ENCODE measurements at regions of chr13 and their contacts with region 1.

Region 1: GRCh38 chr13:43905435-43906031 is 25.8 kb downstream of the LACC1 start:
- DNase-seq: peak; percentile 44
- H3K4me3 ChIP-seq: no peak overlapping the region
- H3K27ac ChIP-seq: no peak overlapping the region
- H3K4me1 ChIP-seq: no peaks in the 10 kb centered on the region
- H3K27me3 ChIP-seq: no peaks in the 10 kb centered on the region
- CTCF ChIP-seq: peak; percentile 63

Region 2: GRCh38 chr13:43786773-43787517 is 118.6 kb before region 1 on chr13 and contains the start of gene ENOX1:
- intact Hi-C with region 1: no loop called
- DNase-seq: peak; percentile 22
- H3K4me3 ChIP-seq: peak within 1 kb of the TSS; percentile 50
- H3K27ac ChIP-seq: peak within 1 kb of the TSS; percentile 66
- H3K4me1 ChIP-seq: peaks cover 3% of the 10 kb centered on the region
- H3K27me3 ChIP-seq: peaks cover 9% of the 10 kb centered on the region
- CTCF ChIP-seq: no peak
- total RNA-seq, gene ENOX1: 0.22 to 1.4 TPM

Region 3: DNA sequence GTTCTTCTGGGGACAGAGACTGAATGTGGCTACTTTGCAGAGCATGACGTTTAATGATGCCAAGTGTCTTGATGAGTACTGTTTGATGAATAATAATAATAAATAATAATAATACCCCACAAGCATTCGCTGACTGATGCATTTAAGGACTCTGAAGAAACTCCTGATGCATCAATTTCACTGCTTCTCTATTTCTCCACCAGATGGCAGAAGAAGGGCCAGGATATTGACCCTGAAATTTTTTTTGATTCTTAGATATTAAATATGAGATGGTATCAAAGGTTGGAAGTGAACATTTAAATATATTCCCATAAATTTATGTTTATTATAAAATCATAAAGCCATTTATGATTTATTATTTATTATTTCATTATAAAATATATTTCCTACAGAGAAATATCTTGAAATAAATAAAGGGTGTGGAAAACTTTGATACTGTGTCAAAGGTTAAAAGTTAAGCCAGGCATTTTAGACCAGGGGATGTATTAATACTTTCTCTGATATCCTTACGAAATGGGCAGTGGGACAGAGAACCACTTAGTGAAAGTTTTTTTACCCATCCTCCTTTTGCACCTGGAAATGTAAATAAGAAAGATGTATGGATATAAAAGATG is 145.0 kb after region 1 on chr13:
- intact Hi-C with region 1: loop called (anchors 2 kb)
- DNase-seq: no peak
- H3K4me3 ChIP-seq: no peak overlapping the region
- H3K27ac ChIP-seq: peak overlapping the region; percentile 42
- H3K4me1 ChIP-seq: peaks cover 6% of the 10 kb centered on the region
- H3K27me3 ChIP-seq: no peaks in the 10 kb centered on the region
- CTCF ChIP-seq: peak; percentile 92

Region 4: DNA sequence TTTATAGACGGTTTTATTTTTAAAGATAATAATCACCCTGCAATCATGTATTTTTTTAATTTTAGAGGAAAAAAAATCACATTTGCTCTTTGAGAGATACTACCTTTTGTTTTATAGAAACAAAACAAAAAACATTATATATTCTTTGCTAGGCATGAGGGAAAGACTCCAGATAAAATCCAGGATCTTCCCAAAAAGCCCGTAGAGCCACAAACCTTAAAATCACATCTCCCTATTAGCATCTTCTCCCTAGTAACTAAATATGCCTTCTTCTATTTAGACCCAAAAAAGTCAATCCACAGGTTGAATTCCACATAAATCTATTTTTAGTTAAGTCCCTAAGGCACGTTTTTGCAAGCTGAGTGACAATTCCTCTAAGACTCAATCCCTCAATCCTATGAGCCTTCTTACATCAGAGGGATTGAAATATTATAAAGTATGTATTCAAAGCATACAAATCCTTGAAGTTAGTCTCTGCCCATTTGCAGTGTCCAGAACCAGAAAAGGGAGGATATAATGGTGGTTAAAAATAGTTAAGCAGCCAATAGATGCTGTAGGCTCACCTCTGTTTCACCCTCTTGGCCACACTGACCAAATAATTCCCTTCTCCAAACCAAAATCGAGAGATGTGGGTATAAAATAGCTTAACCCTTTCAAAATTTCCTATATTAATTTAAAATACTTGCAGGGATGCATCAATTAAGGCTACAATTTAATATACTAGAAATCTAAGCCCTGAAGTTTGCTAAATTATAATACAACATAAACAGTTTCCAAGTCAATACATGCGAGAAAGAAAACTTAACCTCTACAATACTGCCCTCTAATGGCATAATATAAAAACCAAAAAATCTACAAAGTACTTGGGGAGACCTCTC is 532.1 kb after region 1 on chr13:
- intact Hi-C with region 1: loop called (anchors 2 kb)
- DNase-seq: no peak
- H3K4me3 ChIP-seq: peak overlapping the region; percentile 59
- H3K27ac ChIP-seq: peak overlapping the region; percentile 94
- H3K4me1 ChIP-seq: peaks cover 3% of the 10 kb centered on the region
- H3K27me3 ChIP-seq: no peaks in the 10 kb centered on the region
- CTCF ChIP-seq: peak; percentile 58

Region 5: GRCh38 chr13:44470638-44471562 is 565.4 kb after region 1 on chr13:
- intact Hi-C with region 1: loop called (anchors 2 kb)
- DNase-seq: no peak
- H3K4me3 ChIP-seq: no peak overlapping the region
- H3K27ac ChIP-seq: no peak overlapping the region
- H3K4me1 ChIP-seq: no peaks in the 10 kb centered on the region
- H3K27me3 ChIP-seq: no peaks in the 10 kb centered on the region
- CTCF ChIP-seq: peak; percentile 40

Region 6: DNA sequence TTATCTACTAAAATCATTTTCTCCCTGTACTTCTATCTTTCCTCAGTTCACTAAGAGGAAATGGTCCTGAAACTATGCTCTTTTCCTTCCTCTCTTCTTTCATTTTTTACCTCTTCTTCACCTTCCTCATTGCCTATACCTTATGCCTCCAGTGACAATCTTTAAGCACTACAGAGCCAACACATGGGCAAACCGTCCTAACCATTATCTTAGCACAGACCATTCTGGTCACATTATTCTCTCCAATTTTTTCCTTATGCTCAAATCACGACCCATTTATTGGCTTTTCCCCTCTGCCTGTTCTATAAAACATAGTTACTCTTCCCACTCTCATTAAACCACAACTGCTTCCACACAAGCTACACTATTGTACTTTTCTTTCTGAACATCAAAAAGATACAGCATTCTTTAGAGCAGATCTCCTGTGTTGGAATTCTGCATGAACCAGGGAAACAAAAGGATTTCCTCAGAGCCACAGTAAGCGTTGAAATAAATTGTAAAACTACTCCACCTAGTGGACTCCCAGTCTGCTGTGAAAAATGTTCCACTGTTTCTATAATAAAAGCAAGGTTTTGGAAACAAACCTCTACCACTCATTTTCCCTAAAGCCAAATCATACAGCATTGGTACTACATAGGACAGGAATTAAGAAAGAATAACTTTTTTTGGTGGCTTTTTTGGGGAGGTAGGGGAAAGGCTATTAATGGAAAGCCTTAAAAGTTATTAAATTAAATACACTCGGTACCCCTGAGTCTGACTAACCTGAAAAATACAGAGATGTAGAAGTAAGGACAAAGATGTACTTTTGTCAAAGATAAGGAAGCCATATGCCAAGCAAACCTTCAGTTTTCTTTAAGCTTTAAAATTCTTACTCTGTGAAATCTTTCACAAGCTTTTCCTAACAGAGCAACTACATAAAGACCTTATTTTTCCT is 1064.3 kb after region 1 on chr13:
- intact Hi-C with region 1: loop called (anchors 10 kb)
- DNase-seq: no peak
- H3K4me3 ChIP-seq: no peak overlapping the region
- H3K27ac ChIP-seq: no peak overlapping the region
- H3K4me1 ChIP-seq: no peaks in the 10 kb centered on the region
- H3K27me3 ChIP-seq: no peaks in the 10 kb centered on the region
- CTCF ChIP-seq: peak; percentile 73

Measured in colonic mucosa (tissue), 4 donors.